ENCODE measurements at regions of chr12 and their contacts with region 1.

Region 1: DNA sequence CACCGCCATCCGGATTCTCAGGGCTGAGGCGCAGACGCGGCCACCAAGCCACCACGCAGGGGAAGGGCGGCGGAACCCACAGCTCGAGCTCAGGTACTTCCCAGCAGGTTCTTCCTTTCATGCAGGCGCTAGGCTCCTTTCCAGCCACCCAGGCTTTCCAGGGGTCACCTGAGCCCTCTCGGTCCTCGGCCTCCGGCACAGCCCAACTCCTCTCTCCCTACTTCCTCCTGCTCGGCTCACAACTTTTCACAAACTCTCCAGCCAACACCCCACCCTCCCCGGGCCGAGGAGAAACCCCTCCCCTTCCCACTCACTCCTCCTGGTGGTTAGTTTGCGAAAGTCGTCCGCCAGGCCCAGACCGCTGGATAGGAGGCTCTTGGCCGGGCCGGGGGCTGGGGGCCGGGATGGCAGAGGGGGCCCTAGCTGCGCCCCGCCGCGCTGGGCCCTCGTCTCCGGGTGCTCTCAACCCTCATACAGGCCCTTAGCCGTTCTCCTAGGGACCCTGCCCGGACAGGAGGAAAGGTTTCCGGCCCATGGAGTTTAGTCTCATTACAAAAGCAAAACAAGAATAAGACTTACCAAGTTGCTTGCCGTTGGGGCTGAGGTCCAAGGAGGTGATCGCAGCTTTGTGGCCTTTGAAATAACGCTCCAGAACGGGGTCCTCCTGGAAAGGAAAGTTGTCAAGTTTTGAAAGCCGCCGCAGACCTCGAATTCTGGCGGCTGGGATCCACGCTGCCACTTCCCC is at the start of gene GALNT4:
- DNase-seq: peak; percentile 89
- CTCF ChIP-seq: peak; percentile 65

Region 2: DNA sequence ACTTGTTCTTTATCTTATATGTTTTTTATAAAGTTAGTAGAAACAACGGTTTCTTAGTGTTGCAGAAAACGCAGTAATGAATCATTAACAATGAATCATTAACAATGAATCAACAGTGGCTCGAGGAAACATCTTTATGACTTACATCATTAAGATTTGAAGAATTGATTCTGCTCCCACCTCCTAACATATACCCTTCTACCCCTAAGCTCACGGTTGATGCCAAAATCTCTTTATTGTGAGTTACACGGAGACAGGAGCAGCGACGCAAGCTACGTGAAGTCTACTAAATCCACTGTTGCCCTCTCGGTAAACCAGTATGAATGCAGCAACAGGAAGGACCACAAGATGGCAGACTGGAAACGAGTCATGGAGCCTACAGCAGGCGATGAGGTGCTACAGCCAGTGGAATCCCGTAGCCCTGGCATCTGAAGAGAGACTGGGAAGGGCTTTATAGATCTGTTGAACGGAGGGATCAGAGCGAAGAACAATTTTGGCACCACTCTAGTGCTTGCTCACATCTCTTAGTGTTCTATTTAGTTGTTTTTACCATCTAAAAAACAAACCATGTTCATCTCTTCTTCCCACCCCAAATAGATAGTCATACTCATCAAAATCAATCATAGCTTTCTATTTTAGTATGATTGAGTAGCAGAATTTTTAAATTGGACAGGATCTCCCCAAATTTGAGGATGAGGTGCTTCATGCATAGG is 505.1 kb before region 1 on chr12:
- in situ Hi-C with region 1: loop called (anchors 10 kb)
- DNase-seq: peak; percentile 53
- CTCF ChIP-seq: peak; percentile 79

Region 3: GRCh38 chr12:89244536-89244935 is 280.2 kb before region 1 on chr12:
- in situ Hi-C with region 1: no loop called
- DNase-seq: no peak
- CTCF ChIP-seq: no peak

Region 4: DNA sequence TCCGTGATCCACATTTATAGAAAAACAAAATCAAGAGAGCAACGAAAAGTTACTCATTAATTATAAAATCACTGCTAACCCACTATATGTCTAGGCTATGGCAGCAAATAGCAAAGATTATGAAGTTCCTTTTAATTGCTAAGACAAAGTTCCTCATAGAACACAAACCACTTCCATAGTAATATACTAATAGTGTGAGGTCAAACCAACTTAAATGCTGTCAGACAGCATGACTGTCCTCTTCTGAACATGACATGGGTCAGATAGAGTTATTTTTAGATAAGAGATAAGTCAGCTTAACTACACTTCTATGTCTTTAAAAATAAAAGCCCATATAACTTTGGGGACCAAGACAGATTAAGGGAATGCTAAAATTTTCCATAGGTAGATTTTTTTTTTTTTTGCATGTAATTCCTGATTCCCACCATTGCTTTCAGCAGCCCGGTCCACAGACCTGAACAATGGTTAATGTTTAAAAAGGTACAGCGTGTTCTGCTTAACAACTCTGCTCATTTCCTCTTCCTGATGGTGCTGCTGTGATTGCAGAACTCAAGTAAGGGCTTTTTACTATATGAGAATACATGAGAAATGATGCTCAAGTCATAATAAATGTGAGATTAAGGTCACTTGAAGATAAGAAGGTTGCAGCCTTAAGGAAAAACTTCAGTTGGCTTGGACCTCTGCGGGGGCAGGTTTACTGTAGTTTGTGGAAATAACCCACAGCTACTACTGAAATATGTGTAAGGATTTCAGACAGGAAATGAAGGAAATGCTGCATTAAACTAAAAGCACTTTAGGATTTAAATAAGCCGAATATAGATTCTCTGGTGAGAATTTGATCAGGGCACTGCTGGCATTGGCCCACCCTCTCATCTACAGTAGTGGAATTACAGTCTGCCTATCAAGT is 134.7 kb before region 1 on chr12:
- in situ Hi-C with region 1: no loop called
- DNase-seq: no peak
- CTCF ChIP-seq: no peak

Region 5: GRCh38 chr12:89470741-89471509 is 53.8 kb before region 1 on chr12:
- in situ Hi-C with region 1: loop called (anchors 5 kb)
- DNase-seq: peak; percentile 42
- CTCF ChIP-seq: peak; percentile 53

Region 6: DNA sequence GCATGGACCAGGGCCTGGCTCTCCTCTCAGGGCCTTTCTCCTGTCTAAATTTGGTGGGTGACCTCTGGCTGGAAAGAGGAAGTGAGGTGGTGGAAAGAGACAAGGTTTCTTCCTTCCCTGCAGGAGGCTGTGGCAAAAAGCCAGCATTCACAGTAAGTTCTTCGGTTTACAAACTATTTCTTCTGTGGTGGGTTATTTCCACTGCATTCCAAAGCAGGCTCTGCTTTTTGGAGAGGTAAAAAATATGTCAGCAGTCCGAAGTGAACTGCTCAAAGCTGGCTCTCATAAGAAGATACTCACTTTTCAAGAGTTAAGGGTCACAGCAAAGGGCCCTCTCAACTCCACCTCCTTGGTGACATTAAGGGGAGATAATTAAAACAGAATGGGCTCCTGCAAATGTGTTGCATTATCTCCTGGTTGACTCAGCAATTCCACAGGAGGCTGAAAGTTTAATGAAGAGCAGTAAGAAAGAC is 50.1 kb after region 1 on chr12:
- in situ Hi-C with region 1: no loop called
- DNase-seq: no peak
- CTCF ChIP-seq: no peak

Region 7: DNA sequence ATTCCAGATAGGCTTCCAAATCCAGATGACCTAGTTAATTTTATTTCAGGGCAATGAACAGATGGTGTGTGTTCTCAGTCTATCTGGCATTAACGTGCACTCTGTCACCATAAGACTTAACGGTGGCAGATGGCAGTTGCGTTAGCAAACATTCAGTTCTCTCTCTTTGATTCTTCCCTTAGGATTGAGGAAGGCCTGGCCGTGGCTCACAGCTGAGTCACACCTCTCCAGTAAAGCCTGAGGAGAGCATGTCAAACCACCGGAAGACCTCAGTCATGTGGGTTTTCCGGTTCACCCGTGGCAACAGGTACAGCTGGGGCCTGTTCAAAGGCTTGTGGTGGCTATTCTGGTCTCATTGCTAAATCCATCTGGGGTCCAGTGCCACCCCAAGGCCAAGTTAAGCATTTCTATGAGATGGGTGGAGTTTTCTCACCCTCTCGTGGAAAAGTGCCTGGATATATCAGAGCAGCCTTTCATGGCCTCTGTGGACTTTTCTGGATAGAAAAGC is 729.0 kb after region 1 on chr12:
- in situ Hi-C with region 1: loop called (anchors 25 kb)
- DNase-seq: peak; percentile 37
- CTCF ChIP-seq: peak; percentile 11

Region 8: DNA sequence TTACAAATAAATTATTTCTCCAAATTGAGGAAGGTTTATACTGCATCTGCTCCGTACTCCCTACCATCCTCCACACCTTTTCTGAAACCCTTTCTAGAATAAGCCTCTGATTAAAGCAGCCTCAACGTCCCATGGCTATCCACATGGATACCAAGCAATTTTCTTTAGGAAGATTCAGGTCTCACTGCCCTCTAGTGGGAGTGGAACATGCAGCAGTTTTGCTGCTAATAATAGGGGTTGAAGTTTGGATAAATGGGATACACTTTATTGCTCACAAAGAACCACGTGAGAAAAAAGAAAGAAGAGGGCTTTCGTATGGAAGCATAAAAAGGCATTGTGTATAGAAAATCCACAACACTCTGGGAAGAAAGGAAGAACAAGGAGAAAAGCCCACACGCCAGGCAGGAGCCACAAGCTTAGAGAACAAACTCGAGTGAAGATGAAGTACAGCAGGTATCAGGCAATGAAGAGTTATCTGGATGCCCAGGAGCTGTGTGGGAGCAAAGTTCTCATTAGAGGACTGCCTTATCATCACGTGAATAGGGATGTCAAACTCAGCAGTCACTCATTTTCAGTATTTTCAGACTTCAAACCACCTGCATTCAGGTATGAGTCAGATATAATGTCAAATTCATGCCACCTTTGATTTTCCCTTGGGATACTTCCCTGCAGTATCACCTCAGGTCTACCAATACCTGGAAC is 1384.5 kb after region 1 on chr12:
- in situ Hi-C with region 1: loop called (anchors 25 kb)
- DNase-seq: no peak
- CTCF ChIP-seq: peak; percentile 61